Aorta (tissue), 5 donors: ENCODE measurements at regions of chr1 and their contacts with region 1.

Region 1: GRCh38 chr1:21937372-21938221 is 487 bp upstream of the HSPG2 start:
- DNase-seq: peak; percentile 89 to 92
- ATAC-seq: peak; percentile 87
- H3K4me3 ChIP-seq: peak overlapping the region in 1 of 2 donors; percentile 98
- H3K27ac ChIP-seq: peak overlapping the region; percentile 29 to 74
- H3K4me1 ChIP-seq: peaks cover 0 to 3% of the 10 kb centered on the region in 2 donors
- H3K27me3 ChIP-seq: no peaks in the 10 kb centered on the region

Region 2: DNA sequence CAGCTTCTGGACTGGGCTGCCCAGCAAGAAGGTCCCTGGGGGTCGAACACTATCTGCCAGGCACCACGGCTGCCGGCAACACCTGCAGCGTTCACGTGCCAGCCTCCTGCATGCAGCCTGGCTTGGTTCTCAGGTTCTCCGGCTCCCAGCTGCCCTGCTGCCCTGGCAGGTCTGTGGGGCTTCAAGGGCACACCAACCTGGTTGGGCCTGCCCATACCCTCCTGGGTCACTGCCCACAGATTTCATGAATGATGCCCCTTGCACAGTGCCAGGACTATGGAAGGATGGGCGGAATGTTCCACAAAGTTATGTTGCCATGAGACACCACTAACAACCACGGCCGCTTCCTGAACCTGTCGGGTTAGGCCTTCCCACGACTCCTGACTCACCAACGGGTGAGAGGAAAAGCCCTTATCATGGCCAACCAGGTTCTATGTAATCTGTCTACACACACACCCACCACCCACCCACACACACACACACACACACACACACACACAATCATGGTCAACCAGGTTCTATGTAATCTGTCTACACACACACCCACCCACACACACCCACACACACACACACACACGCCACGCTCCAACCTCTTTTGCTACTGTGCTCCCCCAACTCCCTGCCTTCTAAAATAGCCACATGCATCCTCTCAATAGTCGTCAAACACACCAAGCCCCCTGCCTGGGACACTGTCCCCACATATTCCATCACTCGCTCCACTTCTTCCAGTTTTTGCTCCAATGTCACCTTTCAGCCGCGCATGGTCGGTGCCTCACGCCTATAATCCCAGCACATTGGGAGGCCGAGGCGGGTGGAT is 32.7 kb before region 1 on chr1:
- intact Hi-C with region 1: loop called (anchors 5 kb)
- DNase-seq: peak; percentile 81 to 84
- ATAC-seq: peak; percentile 27
- H3K4me3 ChIP-seq: no peak overlapping the region
- H3K27ac ChIP-seq: peak overlapping the region; percentile 1 to 81
- H3K4me1 ChIP-seq: peaks cover 0 to 9% of the 10 kb centered on the region in 2 donors
- H3K27me3 ChIP-seq: no peaks in the 10 kb centered on the region